Tibial artery (tissue), 4 donors: ENCODE measurements at regions of chr11 and their contacts with region 1.

Region 1: DNA sequence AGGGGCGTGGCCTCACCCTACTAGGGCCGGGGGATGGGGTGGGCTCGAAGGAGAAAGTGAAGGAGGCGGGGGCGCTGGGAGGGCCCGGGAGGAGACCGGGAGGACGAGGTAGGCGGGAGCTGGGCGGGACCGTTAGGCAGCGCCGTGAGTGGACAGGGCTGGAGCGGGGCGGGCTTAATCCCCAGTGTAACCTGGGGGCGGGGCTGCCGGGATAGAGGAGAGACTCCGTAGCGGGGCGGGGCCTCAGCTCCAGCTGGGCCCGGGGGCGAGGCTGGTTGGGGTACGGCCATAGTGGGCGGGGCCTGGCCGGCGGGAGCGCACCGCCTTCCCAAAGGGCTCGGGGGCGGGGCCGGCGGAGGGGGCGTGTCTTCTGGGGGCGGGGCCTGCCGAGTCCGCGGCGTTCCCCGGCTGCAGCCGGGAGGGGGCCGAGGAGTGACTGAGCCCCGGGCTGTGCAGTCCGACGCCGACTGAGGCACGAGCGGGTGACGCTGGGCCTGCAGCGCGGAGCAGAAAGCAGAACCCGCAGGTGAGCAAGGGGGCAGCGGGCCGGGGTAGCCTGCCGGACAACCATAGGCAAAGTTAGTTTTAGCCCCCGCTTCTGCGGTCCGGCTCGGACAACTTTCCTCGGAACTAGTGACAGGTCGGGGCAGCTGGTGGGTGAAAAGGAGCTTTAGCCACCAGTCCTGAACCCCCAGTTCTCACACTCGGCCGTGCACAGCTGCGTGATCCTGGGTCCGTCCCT is at the start of gene CD82:
- DNase-seq: peak; percentile 100
- H3K4me3 ChIP-seq: peak within 1 kb of the TSS; percentile 59 to 70
- H3K27ac ChIP-seq: peak within 1 kb of the TSS; percentile 98 to 99
- H3K4me1 ChIP-seq: peaks cover 6 to 76% (median 61%) of the 10 kb centered on the region in 4 donors
- H3K27me3 ChIP-seq: no peaks in the 10 kb centered on the region
- CTCF ChIP-seq: peak; percentile 43

Region 2: GRCh38 chr11:44600839-44601383 is 35.5 kb after region 1 on chr11:
- intact Hi-C with region 1: loop called (anchors 5 kb)
- DNase-seq: peak in 1 of 2 donors; percentile 85
- H3K4me3 ChIP-seq: no peak overlapping the region
- H3K27ac ChIP-seq: peak overlapping the region; percentile 82 to 84
- H3K4me1 ChIP-seq: peaks cover 7 to 100% (median 90%) of the 10 kb centered on the region in 4 donors
- H3K27me3 ChIP-seq: no peaks in the 10 kb centered on the region
- CTCF ChIP-seq: no peak